ENCODE measurements at regions of chr15 and their contacts with region 1.

Region 1: GRCh38 chr15:92924216-92924615 is 24.1 kb downstream of the CHD2 start:
- DNase-seq: no peak
- H3K4me3 ChIP-seq: no peak overlapping the region
- H3K27ac ChIP-seq: no peak overlapping the region
- H3K4me1 ChIP-seq: peaks cover 0 to 11% (median 8%) of the 10 kb centered on the region in 4 experiments; a peak in 5 of 7 replicates
- H3K27me3 ChIP-seq: no peaks in the 10 kb centered on the region
- CTCF ChIP-seq: no peak
- EP300 ChIP-seq: no peak
- POLR2A ChIP-seq: no peak
- RAD21 ChIP-seq: no peak

Region 2: GRCh38 chr15:92733934-92734521 is 190.2 kb before region 1 on chr15:
- CTCF ChIA-PET with region 1: no interaction called
- POLR2A ChIA-PET with region 1: no interaction called
- DNase-seq: no peak
- H3K4me3 ChIP-seq: peak overlapping the region in 1 of 4 experiments; percentile 52; a peak in 2 of 8 replicates
- H3K27ac ChIP-seq: no peak overlapping the region
- H3K4me1 ChIP-seq: no peaks in the 10 kb centered on the region
- H3K27me3 ChIP-seq: no peaks in the 10 kb centered on the region
- CTCF ChIP-seq: no peak
- EP300 ChIP-seq: no peak
- POLR2A ChIP-seq: no peak
- RAD21 ChIP-seq: no peak

Region 3: GRCh38 chr15:92938387-92938786 is 14.2 kb after region 1 on chr15:
- CTCF ChIA-PET with region 1: interaction called, 40 read pairs
- POLR2A ChIA-PET with region 1: interaction called, 5 read pairs
- DNase-seq: no peak
- H3K4me3 ChIP-seq: no peak overlapping the region
- H3K27ac ChIP-seq: no peak overlapping the region
- H3K4me1 ChIP-seq: no peaks in the 10 kb centered on the region
- H3K27me3 ChIP-seq: no peaks in the 10 kb centered on the region
- CTCF ChIP-seq: no peak; a peak in 1 of 4 replicates
- EP300 ChIP-seq: no peak
- POLR2A ChIP-seq: no peak
- RAD21 ChIP-seq: no peak

Region 4: GRCh38 chr15:93121973-93122910 is 198.0 kb after region 1 on chr15:
- CTCF ChIA-PET with region 1: no interaction called
- POLR2A ChIA-PET with region 1: no interaction called
- DNase-seq: no peak
- H3K4me3 ChIP-seq: no peak overlapping the region
- H3K27ac ChIP-seq: no peak overlapping the region
- H3K4me1 ChIP-seq: no peaks in the 10 kb centered on the region
- H3K27me3 ChIP-seq: no peaks in the 10 kb centered on the region
- CTCF ChIP-seq: no peak
- EP300 ChIP-seq: no peak
- POLR2A ChIP-seq: no peak
- RAD21 ChIP-seq: no peak